Right cardiac atrium (tissue), 5 donors: ENCODE measurements at regions of chr2 and their contacts with region 1.

Region 1: DNA sequence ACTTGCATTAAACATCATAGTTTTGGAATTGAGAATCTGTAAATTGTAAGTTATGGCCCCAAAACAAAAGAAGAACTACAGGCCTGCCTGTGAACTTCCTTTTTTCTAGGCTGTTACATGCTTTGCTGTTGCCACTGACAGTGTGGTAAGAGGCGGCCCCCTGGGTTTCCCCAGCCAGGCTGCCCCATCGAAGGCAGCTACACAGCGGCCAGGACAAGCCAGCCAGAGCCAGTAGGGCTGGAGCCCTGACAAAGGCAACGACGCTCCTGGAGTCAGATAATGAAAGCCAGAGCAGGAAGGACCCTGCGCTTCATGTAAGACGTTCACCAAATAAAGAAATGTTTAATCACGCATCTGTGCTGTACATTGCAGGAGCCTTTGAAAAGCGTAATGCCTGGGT is 55.0 kb downstream of the ANKRD44 start:
- DNase-seq: peak; percentile 73 to 90 (median 86)
- ATAC-seq: peak; percentile 92 to 95
- H3K4me3 ChIP-seq: no peak overlapping the region
- H3K27ac ChIP-seq: no peak overlapping the region
- H3K4me1 ChIP-seq: peaks cover 1% of the 10 kb centered on the region
- H3K27me3 ChIP-seq: no peaks in the 10 kb centered on the region

Region 2: DNA sequence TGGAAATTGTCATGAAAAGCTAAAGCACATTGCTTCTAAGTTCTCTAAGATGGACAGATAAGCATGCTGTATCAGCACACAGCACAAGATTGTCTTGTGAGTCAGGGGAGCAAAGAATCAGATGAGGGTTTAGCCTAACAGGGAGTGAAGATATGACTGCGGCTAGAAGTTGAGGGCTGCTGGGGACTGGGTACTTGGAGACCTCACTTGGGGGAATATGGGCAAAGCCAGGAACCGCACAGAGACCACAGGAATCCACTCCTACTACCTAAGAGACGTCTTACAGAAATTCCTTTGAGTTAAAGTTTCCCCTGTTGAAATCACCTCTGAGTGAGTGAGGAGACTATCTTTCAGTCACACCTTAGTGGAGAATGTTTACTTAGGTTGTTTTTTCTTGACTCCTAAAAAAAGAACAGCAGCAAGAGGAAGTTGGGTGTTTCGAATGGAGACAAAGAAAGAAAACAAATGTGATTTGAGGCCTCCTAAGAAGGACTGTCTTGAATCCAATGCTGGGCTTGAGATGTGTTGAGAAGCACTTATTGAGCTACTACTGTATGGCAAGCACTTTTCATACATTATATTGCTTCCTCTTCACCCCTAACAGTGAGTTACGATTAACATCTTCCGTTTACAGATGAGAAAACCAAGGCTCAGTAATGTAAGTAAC is 45.7 kb before region 1 on chr2:
- intact Hi-C with region 1: loop called in 1 of 4 experiments (anchors 10 kb)
- DNase-seq: no peak
- ATAC-seq: no peak
- H3K4me3 ChIP-seq: no peak overlapping the region
- H3K27ac ChIP-seq: no peak overlapping the region
- H3K4me1 ChIP-seq: peaks cover 14% of the 10 kb centered on the region
- H3K27me3 ChIP-seq: no peaks in the 10 kb centered on the region